Breast epithelium (tissue), 4 donors: ENCODE measurements at regions of chr2 and their contacts with region 1.

Region 1: GRCh38 chr2:177038787-177039484 is 173.7 kb upstream of the HNRNPA3 start:
- DNase-seq: no peak
- H3K4me3 ChIP-seq: no peak overlapping the region
- H3K27ac ChIP-seq: no peak overlapping the region
- H3K4me1 ChIP-seq: no peaks in the 10 kb centered on the region
- H3K27me3 ChIP-seq: no peaks in the 10 kb centered on the region
- CTCF ChIP-seq: no peak
- POLR2A ChIP-seq: no peak

Region 2: GRCh38 chr2:175282290-175282689 is 1756.6 kb before region 1 on chr2:
- intact Hi-C with region 1: loop called (anchors 5 kb)
- DNase-seq: no peak
- H3K4me3 ChIP-seq: no peak overlapping the region
- H3K27ac ChIP-seq: no peak overlapping the region
- H3K4me1 ChIP-seq: no peaks in the 10 kb centered on the region
- H3K27me3 ChIP-seq: no peaks in the 10 kb centered on the region
- CTCF ChIP-seq: peak in 1 of 3 donors; percentile 44
- POLR2A ChIP-seq: no peak

Region 3: DNA sequence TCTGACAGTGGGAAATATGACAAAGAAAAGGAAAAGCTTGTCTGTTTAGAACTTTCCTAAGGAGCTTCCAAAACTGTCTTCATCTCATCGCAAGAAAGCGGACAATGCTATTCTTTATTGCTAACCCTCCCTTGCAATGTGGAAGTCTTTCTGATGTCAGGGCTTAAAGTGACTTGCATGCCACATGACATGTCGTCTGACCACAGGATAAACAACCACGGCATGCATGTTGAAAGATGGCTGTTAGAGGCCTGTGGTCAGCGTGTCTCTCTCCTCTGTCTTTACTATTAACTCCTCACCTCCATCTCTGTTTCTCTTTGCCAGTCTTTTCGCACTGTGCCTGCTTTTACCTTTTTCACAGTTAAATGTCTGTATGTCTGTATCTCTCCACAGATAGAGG is 1426.7 kb before region 1 on chr2:
- intact Hi-C with region 1: no loop called
- DNase-seq: no peak
- H3K4me3 ChIP-seq: no peak overlapping the region
- H3K27ac ChIP-seq: no peak overlapping the region
- H3K4me1 ChIP-seq: no peaks in the 10 kb centered on the region
- H3K27me3 ChIP-seq: no peaks in the 10 kb centered on the region
- CTCF ChIP-seq: no peak
- POLR2A ChIP-seq: no peak

Region 4: DNA sequence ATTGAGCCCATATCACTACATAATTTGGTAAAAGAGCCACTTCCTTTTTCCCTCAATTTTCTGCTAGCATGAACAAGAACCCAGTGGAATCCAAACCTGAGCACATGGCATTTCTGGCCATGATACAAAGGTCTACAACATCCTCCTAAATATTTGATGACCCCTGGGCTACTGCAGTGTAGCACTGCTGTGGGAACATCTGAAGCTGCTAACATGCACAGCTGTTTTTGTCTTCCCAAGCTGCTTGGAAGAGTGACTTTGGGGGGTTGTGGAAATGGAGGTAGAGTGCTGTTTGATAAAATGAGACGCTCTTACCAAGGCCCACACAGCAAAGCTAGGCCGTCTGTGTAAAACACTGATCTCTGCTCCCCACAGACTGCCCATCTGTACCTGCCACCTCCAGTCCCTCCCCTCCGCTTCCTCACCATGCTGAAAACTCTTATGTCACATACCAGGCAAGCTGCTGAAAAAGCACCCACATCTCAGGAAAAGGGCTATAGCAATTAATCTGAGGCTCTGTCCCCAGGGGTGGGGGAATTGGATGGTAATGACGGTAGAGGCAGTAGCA is 23.5 kb before region 1 on chr2:
- intact Hi-C with region 1: no loop called
- DNase-seq: no peak
- H3K4me3 ChIP-seq: no peak overlapping the region
- H3K27ac ChIP-seq: no peak overlapping the region
- H3K4me1 ChIP-seq: no peaks in the 10 kb centered on the region
- H3K27me3 ChIP-seq: no peaks in the 10 kb centered on the region
- CTCF ChIP-seq: no peak
- POLR2A ChIP-seq: no peak

Region 5: DNA sequence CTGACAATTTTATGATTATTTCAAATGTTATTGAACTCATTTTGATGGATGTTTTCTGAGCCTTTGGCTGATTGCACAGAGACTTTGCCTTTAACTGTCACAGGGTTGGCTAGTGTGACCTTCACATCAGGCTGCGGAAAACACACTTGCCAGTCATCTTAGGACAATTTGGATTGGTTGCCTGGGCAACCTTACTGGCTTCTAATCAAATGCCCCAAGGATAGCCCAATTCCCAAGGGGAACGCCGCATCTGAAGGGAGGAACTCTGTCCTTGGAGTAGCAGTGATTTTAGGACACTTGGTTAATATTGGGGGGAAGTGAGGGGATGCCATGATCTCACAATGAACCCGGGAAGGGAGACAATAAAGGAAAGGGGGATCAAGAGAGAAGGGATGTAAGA is 1184.9 kb after region 1 on chr2:
- intact Hi-C with region 1: no loop called
- DNase-seq: no peak
- H3K4me3 ChIP-seq: no peak overlapping the region
- H3K27ac ChIP-seq: no peak overlapping the region
- H3K4me1 ChIP-seq: no peaks in the 10 kb centered on the region
- H3K27me3 ChIP-seq: no peaks in the 10 kb centered on the region
- CTCF ChIP-seq: no peak
- POLR2A ChIP-seq: no peak